ENCODE measurements at regions of chr3 and their contacts with region 1.

Region 1: DNA sequence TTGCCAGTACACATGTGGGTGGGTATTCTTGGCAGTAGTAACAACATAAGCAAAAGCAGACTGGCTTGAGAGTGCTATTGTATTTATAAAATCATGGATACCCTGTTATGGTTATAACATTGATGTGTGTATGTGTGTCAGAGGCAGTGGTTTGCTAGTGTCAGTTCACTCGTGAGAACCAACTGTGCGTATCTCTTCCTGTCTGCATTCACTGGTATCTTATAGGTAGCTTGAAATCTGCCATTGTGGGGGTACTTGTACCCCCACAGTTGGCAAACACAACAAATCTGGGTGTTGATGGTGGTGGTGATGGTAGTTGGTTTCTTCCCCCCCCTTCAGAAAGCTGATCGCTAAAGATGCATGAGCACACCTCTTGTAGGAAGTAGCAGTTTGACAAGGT is 355.8 kb upstream of the SATB1 start:
- DNase-seq: peak in 1 of 9 experiments; percentile 36
- ATAC-seq: peak; percentile 54
- H3K4me3 ChIP-seq: no peak overlapping the region
- H3K4me3 Mint-ChIP-seq: peak overlapping the region; percentile 72
- H3K27ac ChIP-seq: no peak overlapping the region
- H3K27ac Mint-ChIP-seq: peak overlapping the region; percentile 79
- H3K4me1 ChIP-seq: peaks cover 34% of the 10 kb centered on the region
- H3K4me1 Mint-ChIP-seq: peaks cover 46% of the 10 kb centered on the region
- H3K27me3 ChIP-seq: no peaks in the 10 kb centered on the region
- H3K27me3 Mint-ChIP-seq: no peaks in the 10 kb centered on the region
- CTCF ChIP-seq: no peak

Region 2: DNA sequence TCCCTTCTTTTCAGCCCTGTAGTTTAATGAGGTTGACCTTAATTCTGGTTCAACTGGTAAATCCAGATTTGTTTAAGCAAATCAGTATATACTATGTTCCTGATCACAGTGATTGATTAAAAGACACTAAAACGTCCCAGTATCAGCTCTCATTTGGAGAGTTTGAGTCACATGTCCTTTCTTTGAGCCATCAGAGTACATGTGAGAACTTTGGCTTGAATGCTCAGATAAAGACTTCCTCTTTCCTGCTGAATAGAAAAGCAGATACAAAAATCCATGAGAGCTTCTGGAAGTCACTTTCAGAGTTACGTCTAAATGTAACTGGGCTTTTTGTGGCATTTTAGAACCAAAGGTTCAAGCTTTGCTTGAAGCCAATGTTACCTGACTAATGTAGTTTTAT is 14.0 kb before region 1 on chr3:
- CTCF ChIA-PET with region 1: no interaction called
- POLR2A ChIA-PET with region 1: no interaction called
- intact Hi-C with region 1: loop called in 1 of 2 experiments (anchors 2 kb)
- DNase-seq: no peak
- ATAC-seq: no peak
- H3K4me3 ChIP-seq: no peak overlapping the region
- H3K4me3 Mint-ChIP-seq: no peak overlapping the region
- H3K27ac ChIP-seq: no peak overlapping the region
- H3K27ac Mint-ChIP-seq: peak overlapping the region; percentile 20
- H3K4me1 ChIP-seq: no peaks in the 10 kb centered on the region
- H3K4me1 Mint-ChIP-seq: peaks cover 14% of the 10 kb centered on the region
- H3K27me3 ChIP-seq: no peaks in the 10 kb centered on the region
- H3K27me3 Mint-ChIP-seq: no peaks in the 10 kb centered on the region
- CTCF ChIP-seq: no peak

Region 3: GRCh38 chr3:19543212-19543841 is 762.4 kb after region 1 on chr3:
- CTCF ChIA-PET with region 1: no interaction called
- POLR2A ChIA-PET with region 1: no interaction called
- intact Hi-C with region 1: no loop called
- DNase-seq: peak in 1 of 9 experiments; percentile 1
- ATAC-seq: no peak
- H3K4me3 ChIP-seq: no peak overlapping the region
- H3K4me3 Mint-ChIP-seq: no peak overlapping the region
- H3K27ac ChIP-seq: no peak overlapping the region
- H3K27ac Mint-ChIP-seq: no peak overlapping the region
- H3K4me1 ChIP-seq: no peaks in the 10 kb centered on the region
- H3K4me1 Mint-ChIP-seq: no peaks in the 10 kb centered on the region
- H3K27me3 ChIP-seq: no peaks in the 10 kb centered on the region
- H3K27me3 Mint-ChIP-seq: no peaks in the 10 kb centered on the region
- CTCF ChIP-seq: no peak